ENCODE measurements at regions of chr14 and their contacts with region 1.

Region 1: GRCh38 chr14:105366386-105367074 is 31.8 kb upstream of the TEX22 start:
- DNase-seq: no peak
- H3K4me3 ChIP-seq: no peak overlapping the region
- H3K27ac ChIP-seq: no peak overlapping the region
- H3K4me1 ChIP-seq: peaks cover 0 to 11% (median 3%) of the 10 kb centered on the region in 4 donors
- H3K27me3 ChIP-seq: no peaks in the 10 kb centered on the region
- CTCF ChIP-seq: no peak

Region 2: GRCh38 chr14:105448706-105449111 is 82.2 kb after region 1 on chr14:
- intact Hi-C with region 1: loop called (anchors 5 kb)
- DNase-seq: peak; percentile 59 to 88
- H3K4me3 ChIP-seq: no peak overlapping the region
- H3K27ac ChIP-seq: peak overlapping the region; percentile 10 to 71
- H3K4me1 ChIP-seq: peaks cover 0 to 16% (median 12%) of the 10 kb centered on the region in 4 donors
- H3K27me3 ChIP-seq: no peaks in the 10 kb centered on the region
- CTCF ChIP-seq: peak; percentile 93 to 98

Region 3: GRCh38 chr14:105470804-105471610 is 104.5 kb after region 1 on chr14:
- intact Hi-C with region 1: no loop called
- DNase-seq: peak in 1 of 2 donors; percentile 67
- H3K4me3 ChIP-seq: no peak overlapping the region
- H3K27ac ChIP-seq: peak overlapping the region; percentile 97 to 98
- H3K4me1 ChIP-seq: peaks cover 15 to 87% (median 62%) of the 10 kb centered on the region in 4 donors
- H3K27me3 ChIP-seq: no peaks in the 10 kb centered on the region
- CTCF ChIP-seq: peak in 1 of 2 experiments; percentile 8

Measured in tibial artery (tissue), 4 donors.